Naive thymus-derived CD4-positive, alpha-beta T cell (primary cell): ENCODE measurements at regions of chr5 and their contacts with region 1.

Region 1: GRCh38 chr5:145574889-145575573 is 260.1 kb downstream of the PRELID2 start:
- DNase-seq: no peak
- ATAC-seq: no peak
- H3K4me3 ChIP-seq: no peak overlapping the region
- H3K4me3 Mint-ChIP-seq: no peak overlapping the region
- H3K27ac ChIP-seq: no peak overlapping the region
- H3K27ac Mint-ChIP-seq: no peak overlapping the region
- H3K4me1 ChIP-seq: no peaks in the 10 kb centered on the region
- H3K4me1 Mint-ChIP-seq: no peaks in the 10 kb centered on the region
- H3K27me3 ChIP-seq: no peaks in the 10 kb centered on the region
- H3K27me3 Mint-ChIP-seq: no peaks in the 10 kb centered on the region

Region 2: GRCh38 chr5:145141534-145141933 is 433.5 kb before region 1 on chr5:
- CTCF ChIA-PET with region 1: no interaction called
- POLR2A ChIA-PET with region 1: no interaction called
- intact Hi-C with region 1: loop called in 1 of 2 experiments (anchors 5 kb)
- DNase-seq: no peak
- ATAC-seq: no peak
- H3K4me3 ChIP-seq: no peak overlapping the region
- H3K4me3 Mint-ChIP-seq: no peak overlapping the region
- H3K27ac ChIP-seq: no peak overlapping the region
- H3K27ac Mint-ChIP-seq: no peak overlapping the region
- H3K4me1 ChIP-seq: no peaks in the 10 kb centered on the region
- H3K4me1 Mint-ChIP-seq: no peaks in the 10 kb centered on the region
- H3K27me3 ChIP-seq: no peaks in the 10 kb centered on the region
- H3K27me3 Mint-ChIP-seq: no peaks in the 10 kb centered on the region